ENCODE measurements at regions of chr9 and their contacts with region 1.

Region 1: DNA sequence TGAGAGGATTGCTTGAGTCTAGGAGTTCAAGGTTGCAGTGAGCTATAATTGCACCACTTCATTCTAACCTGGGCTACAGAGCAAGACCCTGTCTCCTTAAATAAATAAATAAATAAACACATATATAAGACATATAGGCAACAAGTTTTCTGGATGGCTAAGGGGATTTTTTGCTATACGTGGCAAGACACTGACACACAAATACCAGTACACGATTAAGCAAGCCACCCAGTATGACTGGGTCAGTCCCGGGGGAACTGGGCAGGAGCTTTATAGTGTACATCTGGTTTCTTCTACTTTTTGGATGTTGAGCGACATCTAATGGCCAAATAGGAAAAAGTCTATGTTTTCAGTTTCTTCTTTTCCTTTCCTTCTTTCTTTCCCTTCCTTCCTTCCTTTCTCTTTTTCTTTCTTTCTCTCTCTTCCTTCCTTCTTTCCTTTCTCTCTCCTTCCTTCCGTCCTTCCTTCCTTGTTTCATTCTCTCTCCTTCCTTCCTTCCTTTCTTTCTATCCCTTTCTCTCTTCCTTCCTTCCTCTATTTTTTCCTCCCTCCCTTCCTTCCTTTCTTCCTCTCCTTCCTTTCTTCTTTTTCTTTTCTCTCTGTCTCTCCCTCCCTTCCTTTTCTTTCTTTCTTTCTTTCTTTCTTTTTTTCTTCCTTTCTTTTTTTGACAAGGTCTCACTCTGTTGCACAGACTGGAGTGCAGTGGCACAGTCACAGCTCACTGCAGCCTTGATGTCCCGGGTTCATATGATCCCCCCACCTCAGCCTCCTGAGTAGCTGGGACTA is 47.0 kb upstream of the PLIN2 start:
- DNase-seq: peak; percentile 63
- ATAC-seq: peak; percentile 95
- H3K4me3 Mint-ChIP-seq: peak overlapping the region; percentile 13
- H3K27ac Mint-ChIP-seq: peak overlapping the region; percentile 78
- H3K4me1 Mint-ChIP-seq: peaks cover 21% of the 10 kb centered on the region
- H3K27me3 Mint-ChIP-seq: no peaks in the 10 kb centered on the region
- CTCF ChIP-seq: peak; percentile 87

Region 2: GRCh38 chr9:17824191-17824590 is 1350.1 kb before region 1 on chr9:
- CTCF ChIA-PET with region 1: no interaction called
- POLR2A ChIA-PET with region 1: no interaction called
- intact Hi-C with region 1: no loop called
- DNase-seq: no peak
- ATAC-seq: no peak
- H3K4me3 Mint-ChIP-seq: no peak overlapping the region
- H3K27ac Mint-ChIP-seq: no peak overlapping the region
- H3K4me1 Mint-ChIP-seq: peaks cover 3% of the 10 kb centered on the region
- H3K27me3 Mint-ChIP-seq: no peaks in the 10 kb centered on the region
- CTCF ChIP-seq: no peak

Region 3: DNA sequence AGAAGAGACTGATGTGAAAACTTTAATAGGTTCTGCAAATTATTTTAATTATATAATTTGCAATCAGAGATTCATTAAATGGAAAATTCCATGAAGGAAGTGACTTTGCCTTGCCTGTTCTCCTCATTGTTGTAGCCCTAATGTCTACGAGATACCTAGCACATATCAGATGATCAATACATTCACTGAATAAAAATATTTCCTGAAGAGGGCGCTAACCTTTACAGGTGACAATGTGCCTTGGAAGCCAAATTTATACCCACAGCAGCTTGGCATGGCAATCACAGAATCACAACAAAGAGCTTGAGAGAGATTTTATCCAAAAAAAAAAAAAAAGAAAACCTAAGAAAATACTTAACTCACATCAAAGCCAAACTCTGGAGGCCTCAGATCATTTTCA is 89.0 kb before region 1 on chr9:
- CTCF ChIA-PET with region 1: interaction called, 57 read pairs
- POLR2A ChIA-PET with region 1: interaction called, 3 read pairs
- intact Hi-C with region 1: no loop called
- DNase-seq: no peak
- ATAC-seq: peak; percentile 67
- H3K4me3 Mint-ChIP-seq: no peak overlapping the region
- H3K27ac Mint-ChIP-seq: peak overlapping the region; percentile 8
- H3K4me1 Mint-ChIP-seq: peaks cover 2% of the 10 kb centered on the region
- H3K27me3 Mint-ChIP-seq: no peaks in the 10 kb centered on the region
- CTCF ChIP-seq: peak; percentile 43

Region 4: DNA sequence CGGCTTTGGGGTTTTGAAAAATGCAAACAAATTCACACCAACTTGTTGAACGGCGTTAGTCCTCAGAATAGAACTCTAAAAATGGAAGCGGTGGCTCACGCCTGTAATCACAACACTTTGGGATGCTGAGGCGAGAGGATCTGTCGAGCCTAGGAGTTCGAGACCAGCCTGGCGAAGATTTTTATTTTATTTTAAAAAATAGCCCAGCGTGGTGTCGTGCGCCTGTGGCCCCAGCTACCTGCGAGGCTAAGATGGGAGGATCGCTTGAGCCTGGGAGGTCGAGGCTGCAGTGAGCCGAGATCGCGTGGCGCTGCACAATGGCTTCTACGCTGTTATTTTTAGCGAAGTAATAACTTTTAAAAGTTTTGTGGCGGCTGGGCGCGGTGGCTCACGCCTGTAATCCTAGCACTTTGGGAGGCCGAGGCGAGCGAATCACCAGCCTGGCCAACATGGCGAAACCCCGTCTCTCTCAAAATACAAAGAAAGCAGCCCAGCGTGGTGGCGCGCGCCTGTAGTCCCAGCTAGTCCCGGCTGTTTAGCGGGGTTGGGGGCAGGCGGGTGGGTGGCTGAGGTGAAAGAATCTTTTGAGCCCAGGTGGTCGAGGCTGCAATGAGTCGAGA is 46.3 kb before region 1 on chr9:
- CTCF ChIA-PET with region 1: interaction called, 28 read pairs
- POLR2A ChIA-PET with region 1: interaction called, 6 read pairs
- intact Hi-C with region 1: loop called (anchors 5 kb)
- DNase-seq: peak; percentile 52
- ATAC-seq: peak; percentile 14
- H3K4me3 Mint-ChIP-seq: peak overlapping the region; percentile 83
- H3K27ac Mint-ChIP-seq: peak overlapping the region; percentile 97
- H3K4me1 Mint-ChIP-seq: peaks cover 53% of the 10 kb centered on the region
- H3K27me3 Mint-ChIP-seq: no peaks in the 10 kb centered on the region
- CTCF ChIP-seq: no peak

Region 5: DNA sequence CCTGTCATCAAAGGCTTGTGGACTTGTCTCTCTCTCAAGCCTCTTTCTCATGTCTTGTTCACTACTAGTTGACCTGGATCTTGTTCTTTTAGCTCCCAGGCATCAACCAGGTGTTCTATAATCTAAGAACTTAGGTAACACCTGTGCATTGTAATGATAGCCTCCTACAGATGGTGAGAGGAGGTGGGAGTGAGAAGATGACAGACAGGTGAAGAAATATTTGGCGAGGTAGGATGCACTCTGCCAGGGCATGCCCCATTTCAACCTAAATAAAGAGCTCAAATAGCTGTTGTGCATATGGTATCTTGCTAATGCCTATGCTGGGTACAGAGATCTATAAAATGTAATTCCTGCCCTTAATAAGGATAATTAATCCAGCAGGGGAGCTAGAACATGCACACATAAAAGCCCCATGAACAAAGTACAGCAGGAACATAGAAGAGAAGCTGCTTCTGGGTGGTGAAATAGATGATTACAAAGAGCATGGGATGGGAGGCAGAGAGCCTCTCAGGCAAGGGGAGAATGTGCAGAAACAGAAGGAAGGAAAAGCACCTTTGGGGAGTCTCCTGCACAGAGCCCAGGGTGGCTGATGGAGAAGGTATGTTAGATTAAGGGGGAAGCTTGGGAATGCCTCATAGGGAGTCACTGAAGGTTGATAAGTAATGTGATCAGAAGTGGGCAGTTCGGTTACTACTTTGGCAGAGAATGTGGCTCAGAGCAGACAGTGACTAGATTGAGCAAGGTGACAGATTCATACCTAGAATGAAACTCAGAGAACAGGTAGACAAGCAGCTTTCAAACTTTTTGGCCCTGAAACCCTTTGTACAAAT is 19.0 kb before region 1 on chr9:
- CTCF ChIA-PET with region 1: interaction called, 16 read pairs
- POLR2A ChIA-PET with region 1: interaction called, 3 read pairs
- intact Hi-C with region 1: no loop called
- DNase-seq: no peak
- ATAC-seq: peak; percentile 67
- H3K4me3 Mint-ChIP-seq: no peak overlapping the region
- H3K27ac Mint-ChIP-seq: no peak overlapping the region
- H3K4me1 Mint-ChIP-seq: peaks cover 37% of the 10 kb centered on the region
- H3K27me3 Mint-ChIP-seq: no peaks in the 10 kb centered on the region
- CTCF ChIP-seq: no peak

Region 6: GRCh38 chr9:19184144-19184917 is 10.0 kb after region 1 on chr9:
- CTCF ChIA-PET with region 1: interaction called, 19 read pairs
- POLR2A ChIA-PET with region 1: interaction called, 7 read pairs
- intact Hi-C with region 1: no loop called
- DNase-seq: peak; percentile 95
- ATAC-seq: peak; percentile 99
- H3K4me3 Mint-ChIP-seq: peak overlapping the region; percentile 69
- H3K27ac Mint-ChIP-seq: peak overlapping the region; percentile 94
- H3K4me1 Mint-ChIP-seq: peaks cover 31% of the 10 kb centered on the region
- H3K27me3 Mint-ChIP-seq: no peaks in the 10 kb centered on the region
- CTCF ChIP-seq: no peak

Region 7: GRCh38 chr9:19255821-19256220 is 81.5 kb after region 1 on chr9:
- CTCF ChIA-PET with region 1: no interaction called
- POLR2A ChIA-PET with region 1: no interaction called
- intact Hi-C with region 1: no loop called
- DNase-seq: no peak
- ATAC-seq: no peak
- H3K4me3 Mint-ChIP-seq: no peak overlapping the region
- H3K27ac Mint-ChIP-seq: no peak overlapping the region
- H3K4me1 Mint-ChIP-seq: peaks cover 35% of the 10 kb centered on the region
- H3K27me3 Mint-ChIP-seq: no peaks in the 10 kb centered on the region
- CTCF ChIP-seq: no peak